ENCODE measurements at regions of chr19 and their contacts with region 1.

Region 1: DNA sequence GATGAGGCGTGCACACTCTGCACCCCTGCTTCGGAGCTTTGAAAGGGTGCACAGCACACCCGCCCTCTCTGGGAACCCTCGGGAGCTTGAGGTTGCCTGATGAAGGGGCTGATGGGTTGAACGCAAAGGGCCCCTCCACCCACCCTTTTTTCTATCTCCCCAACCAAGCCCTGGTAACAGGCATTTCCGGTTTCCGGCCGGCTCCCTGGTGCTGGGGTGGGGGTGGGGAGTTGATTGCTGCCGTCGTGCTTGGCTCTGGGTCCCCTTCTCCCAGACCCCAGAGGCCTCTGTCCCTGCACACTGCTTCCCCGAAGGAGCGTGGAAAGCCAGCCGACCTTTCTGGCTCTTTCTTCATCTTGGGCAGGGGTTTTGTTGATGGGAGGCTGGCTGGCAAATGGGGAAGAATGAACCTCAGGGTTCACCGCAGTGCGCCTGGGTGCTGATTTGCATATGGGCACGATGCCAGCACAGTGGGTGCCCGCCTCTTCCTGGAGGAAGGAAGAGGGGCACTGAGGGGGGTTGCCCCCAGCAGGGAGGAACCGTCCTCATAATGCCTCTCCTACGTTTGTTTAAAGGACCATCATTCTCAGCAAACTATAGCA is 29.1 kb downstream of the VAV1 start:
- DNase-seq: peak; percentile 91
- ATAC-seq: peak; percentile 74
- H3K4me3 Mint-ChIP-seq: peak overlapping the region; percentile 95
- H3K27ac Mint-ChIP-seq: peak overlapping the region; percentile 93
- H3K4me1 Mint-ChIP-seq: peaks cover 56% of the 10 kb centered on the region
- H3K27me3 Mint-ChIP-seq: no peaks in the 10 kb centered on the region
- CTCF ChIP-seq: no peak

Region 2: GRCh38 chr19:6654347-6655310 is 147.0 kb before region 1 on chr19:
- CTCF ChIA-PET with region 1: no interaction called
- POLR2A ChIA-PET with region 1: no interaction called
- intact Hi-C with region 1: no loop called
- DNase-seq: peak; percentile 88
- ATAC-seq: peak; percentile 80
- H3K4me3 Mint-ChIP-seq: peak overlapping the region; percentile 71
- H3K27ac Mint-ChIP-seq: peak overlapping the region; percentile 95
- H3K4me1 Mint-ChIP-seq: peaks cover 57% of the 10 kb centered on the region
- H3K27me3 Mint-ChIP-seq: no peaks in the 10 kb centered on the region
- CTCF ChIP-seq: no peak

Region 3: GRCh38 chr19:6720369-6721137 is 81.0 kb before region 1 on chr19 and contains the start of gene C3:
- CTCF ChIA-PET with region 1: no interaction called
- POLR2A ChIA-PET with region 1: no interaction called
- intact Hi-C with region 1: no loop called
- DNase-seq: no peak
- ATAC-seq: no peak
- H3K4me3 Mint-ChIP-seq: no peak within 1 kb of the TSS
- H3K27ac Mint-ChIP-seq: no peak within 1 kb of the TSS
- H3K4me1 Mint-ChIP-seq: peaks cover 19% of the 10 kb centered on the region
- H3K27me3 Mint-ChIP-seq: no peaks in the 10 kb centered on the region
- CTCF ChIP-seq: no peak
- total RNA-seq, gene C3: 0.34 to 1.1 TPM

Region 4: DNA sequence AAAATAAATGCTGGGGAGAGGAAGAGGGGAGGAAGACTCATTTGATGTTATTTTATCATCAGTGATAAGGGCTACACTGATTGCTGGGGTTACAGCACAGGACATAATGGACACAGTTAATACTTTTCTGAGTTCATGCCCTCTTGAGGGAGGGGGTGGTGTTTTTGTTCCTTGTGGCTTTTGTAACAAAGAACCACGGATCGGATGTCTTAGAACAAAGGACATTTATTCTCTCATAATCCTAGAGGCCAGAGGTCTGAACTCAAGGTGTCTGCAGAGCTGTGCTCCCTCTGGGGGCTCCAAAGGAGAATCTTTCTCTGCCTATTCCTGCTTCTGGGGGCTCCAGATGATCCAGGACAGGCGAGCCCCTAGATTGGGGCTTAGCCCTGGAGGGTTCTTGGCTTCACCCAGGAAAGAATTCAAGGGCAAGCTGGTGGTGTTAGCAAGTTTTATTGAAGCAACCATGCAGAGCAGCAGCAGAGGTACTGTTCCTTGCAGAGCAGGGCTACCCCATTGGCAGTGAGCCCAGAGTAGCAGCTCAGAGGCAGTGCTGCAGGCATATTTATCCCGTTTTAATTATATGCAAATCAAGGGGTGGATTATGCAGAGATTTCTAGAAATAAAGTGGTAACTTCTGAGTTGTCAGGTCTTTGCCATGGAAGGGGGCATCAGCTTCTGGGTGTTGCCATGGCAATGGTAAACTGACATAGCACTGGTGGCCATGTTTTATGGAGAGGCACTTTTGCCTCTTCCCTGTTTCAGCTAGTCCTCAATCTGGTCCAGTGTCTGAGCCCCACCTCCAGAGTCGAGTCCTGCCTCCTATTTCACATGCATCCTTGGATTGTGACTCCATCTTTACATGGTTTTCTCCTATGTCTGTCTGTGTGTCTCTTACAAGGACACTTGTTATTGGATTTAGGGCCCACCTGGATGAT is 11.1 kb before region 1 on chr19:
- CTCF ChIA-PET with region 1: interaction called, 3 read pairs
- POLR2A ChIA-PET with region 1: interaction called, 26 read pairs
- intact Hi-C with region 1: no loop called
- DNase-seq: no peak
- ATAC-seq: no peak
- H3K4me3 Mint-ChIP-seq: no peak overlapping the region
- H3K27ac Mint-ChIP-seq: peak overlapping the region; percentile 55
- H3K4me1 Mint-ChIP-seq: peaks cover 57% of the 10 kb centered on the region
- H3K27me3 Mint-ChIP-seq: no peaks in the 10 kb centered on the region
- CTCF ChIP-seq: no peak

Region 5: GRCh38 chr19:6811906-6812305 is 10.3 kb after region 1 on chr19:
- CTCF ChIA-PET with region 1: interaction called, 3 read pairs
- POLR2A ChIA-PET with region 1: interaction called, 29 read pairs
- intact Hi-C with region 1: no loop called
- DNase-seq: no peak
- ATAC-seq: no peak
- H3K4me3 Mint-ChIP-seq: no peak overlapping the region
- H3K27ac Mint-ChIP-seq: peak overlapping the region; percentile 14
- H3K4me1 Mint-ChIP-seq: peaks cover 69% of the 10 kb centered on the region
- H3K27me3 Mint-ChIP-seq: no peaks in the 10 kb centered on the region
- CTCF ChIP-seq: no peak

Region 6: GRCh38 chr19:7078008-7078407 is 276.4 kb after region 1 on chr19:
- CTCF ChIA-PET with region 1: no interaction called
- POLR2A ChIA-PET with region 1: no interaction called
- intact Hi-C with region 1: no loop called
- DNase-seq: no peak
- ATAC-seq: no peak
- H3K4me3 Mint-ChIP-seq: no peak overlapping the region
- H3K27ac Mint-ChIP-seq: no peak overlapping the region
- H3K4me1 Mint-ChIP-seq: peaks cover 5% of the 10 kb centered on the region
- H3K27me3 Mint-ChIP-seq: no peaks in the 10 kb centered on the region
- CTCF ChIP-seq: no peak

Measured in activated CD8-positive, alpha-beta T cell treated with anti-CD3 and anti-CD28 coated beads for 36 hours (primary cell).